ENCODE measurements at regions of chr11 and their contacts with region 1.

Region 1: GRCh38 chr11:75773595-75774353 is 5.2 kb downstream of the DGAT2 start:
- DNase-seq: peak; percentile 92
- ATAC-seq: peak; percentile 89
- H3K4me3 ChIP-seq: peak overlapping the region; percentile 34; the same call in 1 of the 2 replicates
- H3K27ac ChIP-seq: peak overlapping the region; percentile 94
- H3K4me1 ChIP-seq: peaks cover 39% of the 10 kb centered on the region
- H3K27me3 ChIP-seq: no peaks in the 10 kb centered on the region
- CTCF ChIP-seq: no peak
- EP300 ChIP-seq: peak; percentile 50 to 99; a peak in 2 of 4 replicates
- POLR2A ChIP-seq: 0 out of 2 replicates have a peak, but pooled peaks have one; percentile 29
- RAD21 ChIP-seq: no peak

Region 2: GRCh38 chr11:75635066-75635862 is 138.5 kb before region 1 on chr11:
- CTCF ChIA-PET with region 1: no interaction called
- POLR2A ChIA-PET with region 1: no interaction called
- RAD21 ChIA-PET with region 1: no interaction called
- SMC1A ChIA-PET with region 1: no interaction called
- in situ Hi-C with region 1: no loop called
- intact Hi-C with region 1: no loop called
- DNase-seq: no peak
- ATAC-seq: no peak
- H3K4me3 ChIP-seq: no peak overlapping the region
- H3K27ac ChIP-seq: no peak overlapping the region
- H3K4me1 ChIP-seq: peaks cover 4% of the 10 kb centered on the region; the same call in 1 of the 2 replicates
- H3K27me3 ChIP-seq: no peaks in the 10 kb centered on the region
- CTCF ChIP-seq: no peak
- EP300 ChIP-seq: no peak
- POLR2A ChIP-seq: no peak
- RAD21 ChIP-seq: no peak

Region 3: DNA sequence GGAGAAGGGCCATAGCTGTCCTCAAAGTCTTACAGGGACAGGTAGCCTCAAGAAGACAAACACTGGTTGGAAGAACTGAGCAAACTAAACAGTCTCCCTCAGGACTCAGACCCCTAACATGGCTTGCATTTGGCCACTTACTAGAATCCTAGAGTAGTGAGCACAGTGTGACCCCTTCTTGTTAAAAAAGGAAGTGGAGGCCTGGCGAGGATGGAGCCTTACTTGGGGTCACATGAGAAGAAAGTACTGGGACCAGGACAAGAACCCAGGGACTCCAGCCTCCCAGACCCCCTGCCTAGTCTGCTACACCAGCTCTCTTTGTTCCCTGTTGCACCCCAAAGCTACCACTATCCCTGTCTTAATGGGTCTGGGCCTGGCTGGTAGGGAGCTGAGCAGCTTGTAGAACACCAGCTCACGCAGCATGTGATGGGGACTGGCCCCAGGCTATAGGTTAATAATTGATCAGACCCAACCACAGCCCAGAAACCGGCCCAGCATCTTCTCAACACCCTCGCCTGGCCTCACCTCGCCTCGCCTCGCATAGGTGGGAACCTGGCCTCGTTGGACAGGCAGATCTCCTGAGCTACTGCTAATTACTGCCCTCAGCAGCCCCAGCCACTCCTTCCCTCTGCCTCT is 12.4 kb after region 1 on chr11:
- CTCF ChIA-PET with region 1: interaction called, 44 read pairs
- POLR2A ChIA-PET with region 1: interaction called, 27 read pairs
- RAD21 ChIA-PET with region 1: interaction called, 21 read pairs
- SMC1A ChIA-PET with region 1: interaction called, 16 read pairs
- in situ Hi-C with region 1: no loop called
- intact Hi-C with region 1: no loop called
- DNase-seq: no peak
- ATAC-seq: peak; percentile 96
- H3K4me3 ChIP-seq: no peak overlapping the region
- H3K27ac ChIP-seq: no peak overlapping the region
- H3K4me1 ChIP-seq: no peaks in the 10 kb centered on the region
- H3K27me3 ChIP-seq: no peaks in the 10 kb centered on the region
- CTCF ChIP-seq: no peak
- EP300 ChIP-seq: no peak
- POLR2A ChIP-seq: no peak
- RAD21 ChIP-seq: no peak